Activated CD8-positive, alpha-beta memory T cell treated with anti-CD3 and anti-CD28 coated beads, Interleukin-2, amount 10 ng/mL, durations not matched to agents 7 days and 5 days (primary cell): ENCODE measurements at regions of chr1 and their contacts with region 1.

Region 1: DNA sequence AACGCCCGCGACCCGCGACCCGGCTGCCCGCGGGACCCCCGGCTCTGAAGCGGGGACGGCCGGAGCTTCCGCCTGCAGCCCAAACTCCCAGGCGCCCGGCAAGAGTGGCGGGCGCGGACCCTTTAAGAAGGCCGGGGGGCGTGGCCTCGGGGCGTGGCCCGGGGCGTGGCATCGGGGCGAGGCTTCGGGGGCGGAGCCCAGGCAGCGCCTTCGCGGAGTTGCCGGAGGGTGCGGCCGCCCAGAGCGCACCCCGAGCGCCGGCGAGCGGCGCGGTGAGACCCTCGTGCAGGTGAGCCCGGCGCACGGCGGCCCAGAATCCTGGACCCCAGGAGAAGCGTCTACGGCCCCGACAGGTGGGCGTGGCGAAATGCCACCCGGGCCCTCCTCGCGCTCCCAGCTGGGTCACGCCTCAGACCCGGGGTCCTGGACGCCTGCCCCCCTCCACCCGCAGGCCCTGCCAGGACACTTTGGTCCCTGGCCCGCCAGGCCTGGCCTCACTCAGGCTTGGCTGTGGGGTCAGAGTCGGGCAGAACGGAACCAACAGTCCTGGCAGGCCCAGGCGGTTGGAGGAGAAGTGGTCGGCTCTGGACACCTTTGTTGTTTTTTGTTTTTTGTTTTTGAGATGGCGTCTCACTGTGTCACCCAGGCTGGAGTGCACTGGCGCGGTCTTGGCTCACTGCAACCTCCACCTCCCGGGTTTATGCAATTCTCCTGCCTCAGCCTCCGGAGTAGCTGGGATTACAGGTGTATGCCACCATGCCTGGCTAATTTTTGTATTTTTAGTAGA is 14.4 kb downstream of the RNF223 start:
- DNase-seq: peak; percentile 95
- ATAC-seq: peak; percentile 73
- H3K4me3 Mint-ChIP-seq: peak overlapping the region; percentile 75
- H3K27ac Mint-ChIP-seq: no peak overlapping the region
- H3K4me1 Mint-ChIP-seq: peaks cover 39% of the 10 kb centered on the region
- H3K27me3 Mint-ChIP-seq: peaks cover 20% of the 10 kb centered on the region

Region 2: DNA sequence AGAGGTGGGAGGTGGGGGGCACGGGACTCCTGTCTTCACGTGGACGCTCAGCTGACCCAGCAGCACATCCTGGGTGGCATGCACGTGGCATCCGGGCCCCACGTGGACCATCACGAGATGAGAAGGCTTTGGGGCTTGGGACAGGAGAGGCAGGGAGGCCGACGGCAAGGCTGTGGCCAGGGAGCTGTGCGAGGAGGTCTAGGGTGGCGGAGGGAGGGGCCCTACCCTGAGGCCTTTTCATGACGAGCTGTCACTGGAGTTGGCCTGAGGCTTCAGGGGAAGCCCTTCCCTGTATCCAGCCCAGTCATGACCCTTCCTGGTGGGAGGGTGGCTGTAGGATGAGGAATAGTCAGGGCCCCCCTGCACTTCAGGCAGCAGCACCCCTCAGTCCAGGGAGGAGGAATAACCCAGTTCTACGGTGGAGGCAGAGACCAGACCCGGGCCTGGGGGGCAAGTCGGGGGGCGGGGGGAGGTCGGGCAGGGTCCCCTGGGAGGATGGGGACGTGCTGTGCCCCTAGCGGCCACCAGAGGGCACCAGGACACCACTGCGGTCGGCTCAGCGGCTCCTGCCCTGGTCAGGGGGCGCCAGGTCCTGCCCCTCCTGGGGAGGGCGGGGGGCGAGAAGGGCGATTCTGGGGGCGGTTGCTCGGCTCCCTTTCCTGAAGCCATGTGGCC is 75.8 kb before region 1 on chr1:
- CTCF ChIA-PET with region 1: interaction called, 64 read pairs
- DNase-seq: peak; percentile 69
- ATAC-seq: peak; percentile 74
- H3K4me3 Mint-ChIP-seq: no peak overlapping the region
- H3K27ac Mint-ChIP-seq: no peak overlapping the region
- H3K4me1 Mint-ChIP-seq: no peaks in the 10 kb centered on the region
- H3K27me3 Mint-ChIP-seq: peaks cover 43% of the 10 kb centered on the region

Region 3: DNA sequence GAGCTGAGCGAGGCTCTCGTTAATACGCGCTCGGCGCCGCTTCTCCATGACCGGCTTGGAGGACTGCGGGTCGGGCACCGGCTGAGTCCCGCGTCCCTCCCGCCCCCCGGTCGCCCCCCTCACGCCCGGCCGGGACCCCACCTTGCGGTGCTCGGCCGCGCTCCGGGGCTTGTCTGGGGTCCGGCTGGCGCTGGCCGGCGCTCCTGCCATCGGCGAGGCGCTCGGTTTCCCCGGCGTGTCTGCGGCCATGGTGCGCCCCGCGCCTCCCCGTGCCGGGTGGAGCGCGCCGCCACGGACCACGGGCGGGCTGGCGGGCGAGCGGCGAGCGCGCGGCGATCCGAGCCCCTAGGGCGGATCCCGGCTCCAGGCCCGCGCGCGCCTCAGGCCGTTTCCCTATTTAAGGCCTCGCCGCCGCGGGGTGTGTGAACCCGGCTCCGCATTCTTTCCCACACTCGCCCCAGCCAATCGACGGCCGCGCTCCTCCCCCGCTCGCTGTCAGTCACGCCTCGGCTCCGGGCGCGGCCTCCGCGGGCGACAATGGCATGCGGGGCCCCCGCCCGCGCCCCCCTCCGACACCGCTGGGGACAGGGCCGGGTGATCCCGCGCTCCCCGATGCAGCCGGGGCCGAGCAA is 59.8 kb before region 1 on chr1 and contains the start of gene HES4:
- CTCF ChIA-PET with region 1: interaction called, 10 read pairs
- DNase-seq: peak; percentile 45
- ATAC-seq: peak; percentile 34
- H3K4me3 Mint-ChIP-seq: peak within 1 kb of the TSS; percentile 54
- H3K27ac Mint-ChIP-seq: peak within 1 kb of the TSS; percentile 75
- H3K4me1 Mint-ChIP-seq: peaks cover 15% of the 10 kb centered on the region
- H3K27me3 Mint-ChIP-seq: peaks cover 48% of the 10 kb centered on the region
- total RNA-seq, gene HES4: 0.61 to 1.6 TPM

Region 4: GRCh38 chr1:1013105-1013921 is 46.4 kb before region 1 on chr1 and contains the start of gene ISG15:
- CTCF ChIA-PET with region 1: interaction called, 24 read pairs
- DNase-seq: peak; percentile 96
- ATAC-seq: peak; percentile 91
- H3K4me3 Mint-ChIP-seq: peak within 1 kb of the TSS; percentile 99
- H3K27ac Mint-ChIP-seq: peak within 1 kb of the TSS; percentile 95
- H3K4me1 Mint-ChIP-seq: peaks cover 37% of the 10 kb centered on the region
- H3K27me3 Mint-ChIP-seq: peaks cover 9% of the 10 kb centered on the region
- total RNA-seq, gene ISG15: 432 to 986 TPM

Region 5: GRCh38 chr1:1019122-1019999 is 40.3 kb before region 1 on chr1:
- CTCF ChIA-PET with region 1: interaction called, 24 read pairs
- DNase-seq: peak; percentile 86
- ATAC-seq: peak; percentile 82
- H3K4me3 Mint-ChIP-seq: peak overlapping the region; percentile 61
- H3K27ac Mint-ChIP-seq: no peak overlapping the region
- H3K4me1 Mint-ChIP-seq: peaks cover 29% of the 10 kb centered on the region
- H3K27me3 Mint-ChIP-seq: peaks cover 12% of the 10 kb centered on the region

Region 6: GRCh38 chr1:1033009-1033587 is 26.6 kb before region 1 on chr1:
- CTCF ChIA-PET with region 1: interaction called, 93 read pairs
- DNase-seq: peak; percentile 94
- ATAC-seq: peak; percentile 94
- H3K4me3 Mint-ChIP-seq: no peak overlapping the region
- H3K27ac Mint-ChIP-seq: no peak overlapping the region
- H3K4me1 Mint-ChIP-seq: peaks cover 12% of the 10 kb centered on the region
- H3K27me3 Mint-ChIP-seq: peaks cover 16% of the 10 kb centered on the region

Region 7: DNA sequence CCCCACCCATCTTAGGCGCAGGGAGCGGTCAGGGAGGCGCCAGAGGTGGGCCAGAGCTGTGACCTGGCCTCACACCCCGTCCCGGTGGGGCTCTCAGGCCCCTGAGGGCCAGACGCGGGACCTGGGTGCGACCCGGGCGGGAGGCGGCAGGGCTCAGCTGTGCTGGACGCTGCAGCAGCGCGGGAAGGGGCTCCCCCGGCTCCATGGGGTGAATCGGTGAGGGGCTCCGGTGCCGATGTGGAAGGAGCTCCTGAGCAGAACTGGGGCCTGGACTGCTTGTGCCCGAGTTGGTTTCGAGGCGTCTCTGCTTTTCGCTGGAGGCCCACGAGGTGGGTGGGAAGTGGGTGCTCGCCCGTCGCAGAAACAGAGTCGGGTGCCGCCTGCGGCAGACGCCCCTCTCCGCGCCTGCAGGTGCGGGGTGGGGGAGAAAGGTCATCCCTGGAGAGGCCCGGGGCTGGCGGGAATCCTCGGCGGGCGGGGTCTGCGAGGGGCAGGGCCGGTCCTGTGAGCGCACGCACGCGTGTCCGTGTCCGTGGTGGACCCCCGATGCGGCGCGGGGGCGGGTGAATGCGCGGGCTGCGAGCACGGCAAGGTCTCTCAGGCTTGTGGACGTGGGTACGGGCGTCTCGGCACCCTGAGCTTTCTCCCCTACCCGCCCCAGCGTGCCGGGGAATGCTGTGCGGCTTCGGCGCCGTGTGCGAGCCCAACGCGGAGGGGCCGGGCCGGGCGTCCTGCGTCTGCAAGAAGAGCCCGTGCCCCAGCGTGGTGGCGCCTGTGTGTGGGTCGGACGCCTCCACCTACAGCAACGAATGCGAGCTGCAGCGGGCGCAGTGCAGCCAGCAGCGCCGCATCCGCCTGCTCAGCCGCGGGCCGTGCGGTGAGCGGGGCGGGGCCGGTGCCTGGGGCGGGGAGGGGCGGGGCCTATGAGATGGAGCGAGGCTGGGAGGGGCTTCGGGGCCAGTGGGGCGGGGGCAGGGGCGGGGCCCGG is 19.4 kb before region 1 on chr1:
- CTCF ChIA-PET with region 1: interaction called, 93 read pairs
- DNase-seq: peak; percentile 91
- ATAC-seq: peak; percentile 92
- H3K4me3 Mint-ChIP-seq: peak overlapping the region; percentile 68
- H3K27ac Mint-ChIP-seq: peak overlapping the region; percentile 69
- H3K4me1 Mint-ChIP-seq: peaks cover 27% of the 10 kb centered on the region
- H3K27me3 Mint-ChIP-seq: peaks cover 5% of the 10 kb centered on the region

Region 8: GRCh38 chr1:1225238-1225845 is 165.7 kb after region 1 on chr1:
- CTCF ChIA-PET with region 1: no interaction called
- DNase-seq: no peak
- ATAC-seq: no peak
- H3K4me3 Mint-ChIP-seq: no peak overlapping the region
- H3K27ac Mint-ChIP-seq: no peak overlapping the region
- H3K4me1 Mint-ChIP-seq: peaks cover 12% of the 10 kb centered on the region
- H3K27me3 Mint-ChIP-seq: no peaks in the 10 kb centered on the region